ENCODE measurements at regions of chr1 and their contacts with region 1.

Region 1: GRCh38 chr1:110338886-110339406 is at the start of gene RBM15:
- DNase-seq: peak; percentile 100
- H3K4me3 ChIP-seq: peak within 1 kb of the TSS; percentile 96
- H3K27me3 ChIP-seq: no peaks in the 10 kb centered on the region
- CTCF ChIP-seq: no peak
- polyA plus RNA-seq, gene RBM15: 9.7 and 10.2 TPM in 2 replicates

Region 2: GRCh38 chr1:110312188-110313121 is 26.5 kb before region 1 on chr1:
- CTCF ChIA-PET with region 1: interaction called, 16 read pairs
- POLR2A ChIA-PET with region 1: no interaction called
- DNase-seq: peak; percentile 13
- H3K4me3 ChIP-seq: no peak overlapping the region
- H3K27me3 ChIP-seq: no peaks in the 10 kb centered on the region
- CTCF ChIP-seq: peak; percentile 97

Region 3: GRCh38 chr1:110319332-110320152 is 19.4 kb before region 1 on chr1:
- CTCF ChIA-PET with region 1: interaction called, 14 read pairs
- POLR2A ChIA-PET with region 1: no interaction called
- DNase-seq: no peak
- H3K4me3 ChIP-seq: no peak overlapping the region
- H3K27me3 ChIP-seq: no peaks in the 10 kb centered on the region
- CTCF ChIP-seq: no peak

Region 4: GRCh38 chr1:110360431-110360830 is 21.5 kb after region 1 on chr1:
- CTCF ChIA-PET with region 1: interaction called, 4 read pairs
- POLR2A ChIA-PET with region 1: interaction called, 21 read pairs
- DNase-seq: no peak
- H3K4me3 ChIP-seq: no peak overlapping the region
- H3K27me3 ChIP-seq: no peaks in the 10 kb centered on the region
- CTCF ChIP-seq: no peak

Region 5: DNA sequence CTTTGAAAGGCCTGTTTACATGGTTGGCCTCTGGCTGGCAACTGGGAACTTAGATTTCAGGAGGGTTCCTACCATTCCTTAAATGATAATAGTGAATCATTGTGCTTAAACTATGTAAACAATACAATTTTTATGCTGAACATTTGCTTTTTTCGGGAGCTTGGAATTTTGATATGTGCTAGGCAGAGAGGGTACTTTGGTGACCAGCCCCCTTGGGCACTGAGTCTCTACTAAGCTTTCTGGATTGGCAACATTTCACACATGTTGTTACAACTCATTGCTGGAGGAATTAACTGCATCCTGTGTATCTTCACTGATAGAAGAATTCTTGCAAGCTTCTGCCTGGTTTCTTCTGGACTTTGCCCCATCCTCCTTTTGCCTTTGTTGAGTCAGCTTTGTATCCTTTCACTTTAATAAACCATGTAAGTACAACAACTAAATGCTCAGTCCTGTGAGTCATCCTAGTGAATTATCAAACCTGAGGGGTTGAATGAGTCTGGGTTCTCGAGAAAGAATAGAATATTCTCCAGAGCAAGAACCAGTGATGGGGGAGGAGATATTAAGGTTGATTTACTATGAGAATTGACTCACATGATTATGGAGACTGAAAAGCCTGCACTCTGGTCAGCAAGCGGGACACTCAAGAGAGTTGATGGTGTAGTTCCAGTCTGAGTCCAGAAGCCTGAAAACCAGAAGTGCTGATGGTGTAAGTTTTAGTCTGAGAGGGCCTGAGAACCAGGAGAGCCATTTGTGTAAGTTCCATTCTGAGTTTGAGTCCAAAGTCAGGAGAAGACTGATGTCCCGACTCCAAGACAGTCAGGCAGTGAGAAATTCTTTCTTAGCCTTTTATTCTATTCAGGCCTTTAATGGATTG is 55.0 kb after region 1 on chr1:
- CTCF ChIA-PET with region 1: interaction called, 12 read pairs
- POLR2A ChIA-PET with region 1: no interaction called
- DNase-seq: peak; percentile 66
- H3K4me3 ChIP-seq: no peak overlapping the region
- H3K27me3 ChIP-seq: no peaks in the 10 kb centered on the region
- CTCF ChIP-seq: no peak

Region 6: GRCh38 chr1:110407260-110408210 is 68.6 kb after region 1 on chr1 and contains the start of gene LAMTOR5:
- CTCF ChIA-PET with region 1: interaction called, 11 read pairs
- POLR2A ChIA-PET with region 1: no interaction called
- DNase-seq: peak; percentile 68
- H3K4me3 ChIP-seq: peak within 1 kb of the TSS; percentile 99
- H3K27me3 ChIP-seq: no peaks in the 10 kb centered on the region
- CTCF ChIP-seq: no peak
- polyA plus RNA-seq, gene LAMTOR5: 236 and 261 TPM in 2 replicates

Region 7: GRCh38 chr1:110420874-110421793 is 82.2 kb after region 1 on chr1:
- CTCF ChIA-PET with region 1: no interaction called
- POLR2A ChIA-PET with region 1: no interaction called
- DNase-seq: no peak
- H3K4me3 ChIP-seq: no peak overlapping the region
- H3K27me3 ChIP-seq: peaks cover 4% of the 10 kb centered on the region
- CTCF ChIP-seq: no peak

Region 8: DNA sequence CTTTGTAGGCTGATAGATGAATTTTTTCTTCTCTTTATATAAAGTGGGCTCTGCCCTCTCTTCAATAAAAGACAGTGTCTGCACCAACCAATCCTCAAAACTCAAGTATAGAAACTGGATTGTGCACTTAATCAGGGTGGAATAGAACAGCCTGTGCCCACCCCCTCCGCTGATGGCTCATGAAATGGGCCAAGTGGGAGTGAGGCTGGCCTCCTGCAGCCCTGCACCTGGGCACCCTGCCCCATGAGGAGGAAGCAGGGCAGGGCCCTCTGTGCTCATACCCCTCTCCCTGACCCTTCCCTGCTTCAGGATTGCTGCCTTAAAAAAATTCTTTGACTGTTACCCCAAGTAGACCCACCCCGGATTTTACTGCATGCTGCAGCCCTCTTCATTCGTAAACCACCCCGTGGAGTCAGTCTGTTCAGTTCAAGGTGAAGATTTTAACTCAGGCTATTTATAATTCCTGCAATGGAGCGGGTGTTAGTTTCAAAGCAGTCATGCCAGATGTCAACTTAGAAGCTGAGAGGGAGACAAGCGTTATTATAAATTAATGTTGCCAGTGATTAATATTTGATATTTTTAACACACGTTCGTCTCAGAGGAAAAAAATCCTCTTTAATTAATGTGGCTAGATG is 127.8 kb after region 1 on chr1:
- CTCF ChIA-PET with region 1: no interaction called
- POLR2A ChIA-PET with region 1: no interaction called
- DNase-seq: no peak
- H3K4me3 ChIP-seq: no peak overlapping the region
- H3K27me3 ChIP-seq: peaks cover 3% of the 10 kb centered on the region
- CTCF ChIP-seq: no peak

Measured in BJ (cell line).